ENCODE measurements at regions of chr9 and their contacts with region 1.

Region 1: GRCh38 chr9:91422758-91423711 is 597 bp downstream of the NFIL3 start:
- DNase-seq: peak; percentile 21 to 84 (median 57)
- ATAC-seq: peak; percentile 51
- H3K4me3 ChIP-seq: peak overlapping the region; percentile 28 to 68
- H3K4me3 Mint-ChIP-seq: peak overlapping the region; percentile 94
- H3K27ac ChIP-seq: no peak overlapping the region
- H3K27ac Mint-ChIP-seq: peak overlapping the region; percentile 82
- H3K4me1 ChIP-seq: peaks cover 38% of the 10 kb centered on the region
- H3K4me1 Mint-ChIP-seq: peaks cover 44% of the 10 kb centered on the region
- H3K27me3 ChIP-seq: peaks cover 0 to 15% of the 10 kb centered on the region in 2 experiments
- H3K27me3 Mint-ChIP-seq: peaks cover 27% of the 10 kb centered on the region
- CTCF ChIP-seq: no peak

Region 2: GRCh38 chr9:89602978-89603766 is 1819.9 kb before region 1 on chr9:
- CTCF ChIA-PET with region 1: no interaction called
- POLR2A ChIA-PET with region 1: no interaction called
- intact Hi-C with region 1: loop called in 1 of 2 experiments (anchors 10 kb)
- DNase-seq: peak; percentile 67 to 89 (median 88)
- ATAC-seq: peak; percentile 21
- H3K4me3 ChIP-seq: peak overlapping the region; percentile 50 to 64
- H3K4me3 Mint-ChIP-seq: peak overlapping the region; percentile 79
- H3K27ac ChIP-seq: no peak overlapping the region
- H3K27ac Mint-ChIP-seq: peak overlapping the region; percentile 72
- H3K4me1 ChIP-seq: peaks cover 37% of the 10 kb centered on the region
- H3K4me1 Mint-ChIP-seq: peaks cover 27% of the 10 kb centered on the region
- H3K27me3 ChIP-seq: peaks cover 0 to 9% of the 10 kb centered on the region in 2 experiments
- H3K27me3 Mint-ChIP-seq: peaks cover 3% of the 10 kb centered on the region
- CTCF ChIP-seq: peak; percentile 76

Region 3: DNA sequence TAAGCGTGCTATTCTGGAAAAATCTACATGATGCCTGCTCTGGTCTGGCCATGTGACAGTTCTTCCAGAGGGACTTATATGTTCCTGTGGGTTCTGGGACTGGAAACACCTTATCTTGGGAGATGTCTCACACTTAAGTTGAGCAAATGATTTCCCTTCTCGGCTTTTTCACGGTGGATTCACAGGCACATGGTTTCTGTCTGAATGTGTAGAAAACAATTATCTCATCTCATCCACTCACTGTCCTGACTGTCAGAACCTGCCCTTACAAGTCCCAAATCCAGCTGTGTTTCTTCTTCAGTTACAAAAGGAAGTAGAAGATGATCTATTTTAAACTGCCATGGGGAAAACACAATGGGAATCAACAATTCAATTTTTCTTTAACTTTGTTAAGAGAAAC is 437.4 kb before region 1 on chr9:
- CTCF ChIA-PET with region 1: interaction called, 5 read pairs
- POLR2A ChIA-PET with region 1: no interaction called
- intact Hi-C with region 1: loop called (anchors 1 to 5 kb)
- DNase-seq: no peak
- ATAC-seq: no peak
- H3K4me3 ChIP-seq: no peak overlapping the region
- H3K4me3 Mint-ChIP-seq: no peak overlapping the region
- H3K27ac ChIP-seq: no peak overlapping the region
- H3K27ac Mint-ChIP-seq: no peak overlapping the region
- H3K4me1 ChIP-seq: no peaks in the 10 kb centered on the region
- H3K4me1 Mint-ChIP-seq: no peaks in the 10 kb centered on the region
- H3K27me3 ChIP-seq: no peaks in the 10 kb centered on the region
- H3K27me3 Mint-ChIP-seq: no peaks in the 10 kb centered on the region
- CTCF ChIP-seq: no peak

Region 4: GRCh38 chr9:91089405-91090129 is 333.5 kb before region 1 on chr9:
- CTCF ChIA-PET with region 1: no interaction called
- POLR2A ChIA-PET with region 1: no interaction called
- intact Hi-C with region 1: loop called in 1 of 2 experiments (anchors 5 kb)
- DNase-seq: peak in 2 of 9 experiments; percentile 41 to 45
- ATAC-seq: no peak
- H3K4me3 ChIP-seq: no peak overlapping the region
- H3K4me3 Mint-ChIP-seq: no peak overlapping the region
- H3K27ac ChIP-seq: no peak overlapping the region
- H3K27ac Mint-ChIP-seq: no peak overlapping the region
- H3K4me1 ChIP-seq: no peaks in the 10 kb centered on the region
- H3K4me1 Mint-ChIP-seq: no peaks in the 10 kb centered on the region
- H3K27me3 ChIP-seq: no peaks in the 10 kb centered on the region
- H3K27me3 Mint-ChIP-seq: no peaks in the 10 kb centered on the region
- CTCF ChIP-seq: no peak

Region 5: DNA sequence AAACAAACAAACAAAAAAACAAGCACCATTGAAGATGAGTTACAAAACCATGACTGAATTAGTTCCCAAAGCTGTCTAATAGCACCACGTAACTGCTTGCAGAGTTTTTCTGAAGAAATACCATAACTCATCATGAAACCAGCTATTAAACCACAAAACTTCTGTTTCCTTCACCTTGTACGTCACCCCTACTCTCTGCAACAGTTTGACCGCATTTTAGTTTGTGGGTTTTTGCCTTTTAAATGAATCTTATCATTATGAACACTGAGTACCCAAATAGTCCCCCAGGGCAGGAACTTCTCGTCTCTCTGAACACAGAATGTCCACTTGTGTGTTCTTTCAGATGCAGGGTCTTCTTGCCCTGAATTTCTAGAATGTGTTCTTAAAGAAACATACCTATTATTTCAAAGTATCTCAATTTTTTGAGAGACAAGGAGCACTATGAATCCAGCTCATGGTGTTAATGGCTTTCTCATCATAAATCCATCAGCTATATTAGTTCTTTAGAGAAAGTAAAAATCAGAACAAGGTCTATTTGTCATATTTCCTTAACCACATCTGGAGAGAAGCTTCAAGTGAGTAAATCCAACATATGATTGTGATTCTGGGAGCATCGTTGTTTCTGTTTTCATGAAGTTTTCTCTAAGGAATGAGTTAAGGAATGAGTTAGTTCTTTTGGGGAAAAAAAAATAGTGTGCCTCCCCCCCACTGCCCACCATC is 271.9 kb before region 1 on chr9:
- CTCF ChIA-PET with region 1: no interaction called
- POLR2A ChIA-PET with region 1: no interaction called
- intact Hi-C with region 1: loop called in 1 of 2 experiments (anchors 5 kb)
- DNase-seq: peak in 4 of 9 experiments; percentile 37 to 92 (median 66)
- ATAC-seq: peak; percentile 92
- H3K4me3 ChIP-seq: no peak overlapping the region
- H3K4me3 Mint-ChIP-seq: peak overlapping the region; percentile 23
- H3K27ac ChIP-seq: peak overlapping the region in 1 of 2 experiments; percentile 73
- H3K27ac Mint-ChIP-seq: peak overlapping the region; percentile 56
- H3K4me1 ChIP-seq: peaks cover 31% of the 10 kb centered on the region
- H3K4me1 Mint-ChIP-seq: peaks cover 48% of the 10 kb centered on the region
- H3K27me3 ChIP-seq: no peaks in the 10 kb centered on the region
- H3K27me3 Mint-ChIP-seq: no peaks in the 10 kb centered on the region
- CTCF ChIP-seq: no peak

Region 6: GRCh38 chr9:91193658-91194391 is 229.2 kb before region 1 on chr9:
- CTCF ChIA-PET with region 1: interaction called, 3 read pairs
- POLR2A ChIA-PET with region 1: interaction called, 4 read pairs
- intact Hi-C with region 1: loop called (anchors 1 to 10 kb)
- DNase-seq: peak; percentile 22 to 83 (median 60)
- ATAC-seq: peak; percentile 79
- H3K4me3 ChIP-seq: peak overlapping the region; percentile 46 to 59
- H3K4me3 Mint-ChIP-seq: peak overlapping the region; percentile 86
- H3K27ac ChIP-seq: peak overlapping the region; percentile 50 to 68
- H3K27ac Mint-ChIP-seq: peak overlapping the region; percentile 88
- H3K4me1 ChIP-seq: peaks cover 27% of the 10 kb centered on the region
- H3K4me1 Mint-ChIP-seq: peaks cover 33% of the 10 kb centered on the region
- H3K27me3 ChIP-seq: no peaks in the 10 kb centered on the region
- H3K27me3 Mint-ChIP-seq: no peaks in the 10 kb centered on the region
- CTCF ChIP-seq: no peak

Region 7: DNA sequence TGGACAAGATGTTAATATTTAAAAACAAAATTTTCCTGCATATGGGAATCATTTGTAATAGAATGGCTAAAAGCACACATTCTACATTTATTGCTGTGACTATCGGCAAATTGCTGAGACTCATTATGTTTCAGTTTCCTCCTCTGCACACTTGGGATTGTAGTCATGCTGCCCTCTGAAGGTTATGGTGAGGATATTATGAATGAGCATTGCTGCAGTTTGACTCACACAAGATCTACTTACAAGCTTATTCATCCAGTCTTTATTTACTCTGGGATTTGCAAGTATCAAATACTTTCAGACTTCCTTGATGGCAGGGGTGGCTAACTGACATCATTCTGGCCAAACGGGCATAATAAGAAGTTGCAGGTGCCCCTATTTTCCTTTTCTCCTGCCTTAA is 10.1 kb after region 1 on chr9:
- CTCF ChIA-PET with region 1: interaction called, 10 read pairs
- POLR2A ChIA-PET with region 1: no interaction called
- intact Hi-C with region 1: no loop called
- DNase-seq: peak in 2 of 9 experiments; percentile 54 to 64
- ATAC-seq: peak; percentile 36
- H3K4me3 ChIP-seq: no peak overlapping the region
- H3K4me3 Mint-ChIP-seq: no peak overlapping the region
- H3K27ac ChIP-seq: no peak overlapping the region
- H3K27ac Mint-ChIP-seq: no peak overlapping the region
- H3K4me1 ChIP-seq: no peaks in the 10 kb centered on the region
- H3K4me1 Mint-ChIP-seq: peaks cover 2% of the 10 kb centered on the region
- H3K27me3 ChIP-seq: no peaks in the 10 kb centered on the region
- H3K27me3 Mint-ChIP-seq: peaks cover 2% of the 10 kb centered on the region
- CTCF ChIP-seq: peak; percentile 25

Region 8: GRCh38 chr9:91465420-91465819 is 42.4 kb after region 1 on chr9:
- CTCF ChIA-PET with region 1: no interaction called
- POLR2A ChIA-PET with region 1: no interaction called
- intact Hi-C with region 1: no loop called
- DNase-seq: no peak
- ATAC-seq: no peak
- H3K4me3 ChIP-seq: no peak overlapping the region
- H3K4me3 Mint-ChIP-seq: no peak overlapping the region
- H3K27ac ChIP-seq: no peak overlapping the region
- H3K27ac Mint-ChIP-seq: no peak overlapping the region
- H3K4me1 ChIP-seq: no peaks in the 10 kb centered on the region
- H3K4me1 Mint-ChIP-seq: no peaks in the 10 kb centered on the region
- H3K27me3 ChIP-seq: no peaks in the 10 kb centered on the region
- H3K27me3 Mint-ChIP-seq: peaks cover 17% of the 10 kb centered on the region
- CTCF ChIP-seq: no peak